ENCODE measurements at regions of chr20 and their contacts with region 1.

Region 1: GRCh38 chr20:34312544-34313217 is 9.5 kb upstream of the AHCY start:
- DNase-seq: peak; percentile 81 to 91
- ATAC-seq: peak; percentile 99 to 100 (median 100)
- H3K4me3 ChIP-seq: no peak overlapping the region
- H3K27ac ChIP-seq: no peak overlapping the region
- H3K4me1 ChIP-seq: peaks cover 5% of the 10 kb centered on the region
- H3K27me3 ChIP-seq: peaks cover 0 to 11% (median 4%) of the 10 kb centered on the region in 3 donors
- CTCF ChIP-seq: peak; percentile 99

Region 2: DNA sequence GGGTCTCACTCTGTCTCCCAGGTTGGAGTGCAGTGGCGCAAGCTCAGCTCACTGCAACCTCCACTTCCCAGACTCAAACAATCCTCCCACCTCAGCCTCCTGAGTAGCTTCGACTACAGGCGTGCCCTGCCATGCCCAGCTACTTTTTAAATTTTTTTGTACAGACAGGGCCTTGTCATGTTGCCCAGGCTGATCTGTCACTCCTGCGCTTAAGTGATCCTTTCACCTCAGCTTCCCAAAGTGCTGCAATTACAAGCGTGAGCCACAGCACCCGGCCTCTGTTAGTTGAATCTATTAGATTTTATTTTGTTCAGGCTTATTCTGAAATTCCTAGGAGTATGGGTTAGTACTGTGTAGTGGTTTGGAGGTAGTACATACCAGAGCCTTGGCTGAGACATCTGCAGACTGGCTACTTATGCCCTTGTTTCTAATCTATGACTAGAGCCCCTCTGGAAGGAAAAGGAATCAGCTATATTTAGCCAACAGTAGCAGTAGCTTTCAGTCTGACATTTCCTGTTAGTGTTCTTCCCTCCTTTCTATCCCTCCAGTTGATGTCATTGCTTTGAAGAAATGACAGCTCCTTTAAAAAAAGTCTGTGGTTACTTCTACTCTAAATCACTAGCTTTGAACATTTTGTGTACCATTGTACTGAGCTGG is 124.8 kb after region 1 on chr20:
- intact Hi-C with region 1: no loop called
- DNase-seq: no peak
- ATAC-seq: peak in 3 of 4 donors; percentile 24 to 40 (median 33)
- H3K4me3 ChIP-seq: no peak overlapping the region
- H3K27ac ChIP-seq: no peak overlapping the region
- H3K4me1 ChIP-seq: no peaks in the 10 kb centered on the region
- H3K27me3 ChIP-seq: no peaks in the 10 kb centered on the region
- CTCF ChIP-seq: no peak

Region 3: DNA sequence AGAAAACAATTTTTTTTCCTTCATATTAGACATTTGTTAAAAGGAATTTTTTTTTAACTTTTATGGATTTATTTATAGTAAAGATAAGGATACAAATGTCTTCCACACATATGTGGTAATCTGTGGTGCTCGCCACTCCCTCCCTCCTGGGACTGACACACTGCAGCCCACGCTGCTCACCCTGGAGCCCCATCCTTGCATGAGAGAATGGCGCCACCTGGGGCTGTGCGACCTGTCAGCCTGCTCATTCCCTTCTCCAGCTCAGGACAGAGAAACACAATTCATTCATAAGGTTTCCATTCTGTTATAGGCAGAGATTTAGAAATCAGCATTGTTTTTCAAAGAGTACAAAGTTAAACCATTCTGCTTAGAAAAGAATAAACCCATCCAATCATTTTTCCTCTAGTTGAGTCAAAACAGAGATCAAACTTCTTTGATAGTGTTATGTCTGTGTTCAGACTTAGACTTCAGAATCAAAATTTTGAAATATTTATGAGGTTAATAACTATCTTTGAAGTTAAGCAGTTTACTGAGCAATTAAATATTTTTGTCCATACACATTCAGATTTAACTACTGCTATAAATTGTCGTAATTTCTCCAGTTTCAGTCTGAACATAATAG is 160.7 kb after region 1 on chr20:
- intact Hi-C with region 1: loop called (anchors 5 to 10 kb)
- DNase-seq: peak; percentile 37 to 59
- ATAC-seq: peak; percentile 52 to 63 (median 56)
- H3K4me3 ChIP-seq: no peak overlapping the region
- H3K27ac ChIP-seq: no peak overlapping the region
- H3K4me1 ChIP-seq: peaks cover 26% of the 10 kb centered on the region
- H3K27me3 ChIP-seq: no peaks in the 10 kb centered on the region
- CTCF ChIP-seq: peak; percentile 16

Region 4: DNA sequence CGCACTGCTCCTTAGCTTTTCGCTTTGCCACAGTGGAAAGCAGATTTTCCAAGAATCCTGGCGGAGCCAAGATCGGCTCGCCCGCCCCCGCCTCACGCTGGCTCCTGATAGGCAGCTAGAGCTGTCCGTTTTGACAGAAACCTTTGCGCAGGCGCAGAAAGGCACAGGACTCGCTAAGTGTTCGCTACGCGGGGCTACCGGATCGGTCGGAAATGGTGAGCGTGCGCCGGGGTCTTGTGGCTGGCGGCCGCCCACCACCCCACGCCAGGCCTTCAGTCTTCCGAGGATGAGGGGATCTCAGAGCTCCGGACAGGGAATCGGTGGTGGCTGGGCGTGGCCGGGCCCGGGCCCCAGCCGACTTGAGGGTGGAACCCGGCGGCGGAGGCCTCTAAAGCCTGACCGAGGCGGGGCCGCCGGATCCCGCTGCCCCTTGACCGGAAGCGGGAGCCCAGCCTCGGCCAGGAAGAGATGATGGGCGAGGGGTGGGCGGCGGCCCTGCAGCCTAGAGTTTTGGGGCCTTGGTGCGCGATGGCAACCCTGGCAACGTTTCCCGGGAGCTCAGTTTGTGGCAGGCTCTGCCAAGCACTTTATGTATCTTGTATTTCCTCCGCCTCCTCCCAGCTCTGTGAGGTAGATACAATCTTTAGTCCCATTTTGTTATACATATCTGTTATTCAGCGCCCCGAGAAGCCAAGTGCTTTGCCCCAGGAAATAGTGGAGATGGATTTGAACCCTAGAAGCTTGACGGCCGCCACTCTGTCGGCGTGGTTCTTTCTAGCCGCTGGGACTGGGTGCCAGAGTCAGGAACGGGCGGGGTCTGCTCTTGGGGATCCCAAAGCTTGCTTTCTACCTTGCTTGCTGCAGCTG is 203.8 kb after region 1 on chr20 and contains the start of gene DYNLRB1:
- intact Hi-C with region 1: loop called (anchors 1 to 5 kb)
- DNase-seq: peak; percentile 96 to 99
- ATAC-seq: peak; percentile 96 to 98 (median 98)
- H3K4me3 ChIP-seq: peak within 1 kb of the TSS; percentile 91
- H3K27ac ChIP-seq: peak within 1 kb of the TSS; percentile 96
- H3K4me1 ChIP-seq: peaks cover 25% of the 10 kb centered on the region
- H3K27me3 ChIP-seq: no peaks in the 10 kb centered on the region
- CTCF ChIP-seq: no peak
- total RNA-seq, gene DYNLRB1: 93.2 to 119 (median 99.0) TPM

Region 5: GRCh38 chr20:34522969-34523871 is 210.5 kb after region 1 on chr20:
- intact Hi-C with region 1: loop called (anchors 2 to 5 kb)
- DNase-seq: peak; percentile 60 to 79
- ATAC-seq: peak; percentile 76 to 83 (median 82)
- H3K4me3 ChIP-seq: no peak overlapping the region
- H3K27ac ChIP-seq: peak overlapping the region; percentile 79
- H3K4me1 ChIP-seq: peaks cover 56% of the 10 kb centered on the region
- H3K27me3 ChIP-seq: no peaks in the 10 kb centered on the region
- CTCF ChIP-seq: peak; percentile 72

Region 6: GRCh38 chr20:34704177-34705007 is 391.7 kb after region 1 on chr20 and contains the start of gene TP53INP2:
- intact Hi-C with region 1: loop called in 1 of 2 experiments (anchors 10 kb)
- DNase-seq: peak; percentile 93 to 96
- ATAC-seq: peak; percentile 82 to 86 (median 84)
- H3K4me3 ChIP-seq: peak within 1 kb of the TSS; percentile 81
- H3K27ac ChIP-seq: peak within 1 kb of the TSS; percentile 100
- H3K4me1 ChIP-seq: peaks cover 23% of the 10 kb centered on the region
- H3K27me3 ChIP-seq: no peaks in the 10 kb centered on the region
- CTCF ChIP-seq: no peak
- total RNA-seq, gene TP53INP2: 22.2 to 37.4 (median 27.8) TPM

Region 7: DNA sequence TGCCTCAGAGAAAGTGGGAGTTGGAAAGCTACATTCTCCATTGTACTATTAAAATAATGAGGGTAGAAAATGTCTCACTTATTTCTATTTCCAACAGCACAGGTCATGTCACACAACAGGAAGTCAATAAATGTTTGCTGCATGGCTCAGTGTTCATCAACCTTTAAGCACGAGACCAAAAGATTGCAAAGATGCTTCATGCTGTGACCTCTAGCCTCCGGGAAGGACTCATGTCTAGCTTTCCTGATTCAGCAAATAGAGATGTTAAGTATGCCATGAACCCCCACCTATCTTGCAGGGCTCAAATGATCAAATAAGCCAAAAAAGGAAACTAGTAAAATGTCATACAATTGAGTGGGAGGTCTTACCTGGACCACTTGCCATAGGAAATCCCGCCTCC is 455.4 kb after region 1 on chr20:
- intact Hi-C with region 1: loop called (anchors 10 kb)
- DNase-seq: no peak
- ATAC-seq: no peak
- H3K4me3 ChIP-seq: no peak overlapping the region
- H3K27ac ChIP-seq: no peak overlapping the region
- H3K4me1 ChIP-seq: peaks cover 8% of the 10 kb centered on the region
- H3K27me3 ChIP-seq: no peaks in the 10 kb centered on the region
- CTCF ChIP-seq: no peak